ENCODE measurements at regions of chr2 and their contacts with region 1.

Region 1: DNA sequence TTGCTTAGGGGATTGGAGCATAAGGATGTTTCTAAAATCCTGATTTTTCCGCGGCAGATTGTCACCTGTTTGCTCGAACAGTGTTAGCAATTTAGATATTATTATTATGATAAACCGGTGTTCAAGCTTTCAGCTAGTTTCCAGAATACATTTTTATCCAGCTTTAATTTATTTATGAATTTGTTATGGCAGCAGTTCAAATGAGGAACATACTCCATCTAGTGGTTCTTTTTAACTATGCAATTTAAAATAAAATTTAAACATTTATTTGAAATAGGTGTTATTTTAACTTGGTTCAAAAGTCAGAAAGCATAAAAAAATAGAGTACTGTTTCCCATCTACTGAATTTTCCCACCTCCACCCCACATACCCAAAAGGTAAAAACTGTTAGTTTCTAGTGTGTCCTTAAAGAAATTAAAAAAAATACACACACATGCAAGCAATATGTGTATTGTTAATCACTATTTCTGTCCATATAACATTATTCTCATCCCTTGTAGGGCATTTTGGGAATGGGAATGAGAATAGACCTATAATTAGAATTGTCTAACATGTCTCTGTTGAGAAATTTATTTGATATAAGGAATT is 23.2 kb downstream of the ACOXL start:
- DNase-seq: no peak
- ATAC-seq: no peak
- H3K4me3 ChIP-seq: no peak overlapping the region
- H3K27ac ChIP-seq: no peak overlapping the region
- H3K4me1 ChIP-seq: no peaks in the 10 kb centered on the region
- H3K27me3 ChIP-seq: no peaks in the 10 kb centered on the region
- CTCF ChIP-seq: peak; percentile 34 to 58 (median 34); a peak in 3 of 6 replicates
- EP300 ChIP-seq: no peak
- POLR2A ChIP-seq: no peak
- RAD21 ChIP-seq: peak; percentile 52

Region 2: DNA sequence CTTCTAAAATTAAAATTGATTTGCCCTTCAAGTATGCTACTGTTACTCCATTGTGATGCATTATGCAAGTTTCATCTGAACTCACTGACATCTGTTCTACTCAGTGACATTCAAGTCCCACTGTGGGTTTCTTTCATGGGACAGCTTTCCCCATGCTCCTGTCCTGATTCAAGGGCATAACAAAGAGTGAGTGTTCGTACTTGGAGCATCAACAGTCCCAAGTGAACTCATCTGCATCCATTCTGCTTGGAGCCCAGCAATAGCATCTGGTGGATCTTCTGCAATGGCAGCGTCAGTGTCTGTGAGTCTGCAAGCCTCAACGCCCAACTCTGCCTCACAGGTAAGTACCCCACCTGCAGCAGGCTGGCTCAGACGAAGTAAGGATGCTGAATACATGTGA is 105.2 kb before region 1 on chr2:
- CTCF ChIA-PET with region 1: interaction called, 11 read pairs
- POLR2A ChIA-PET with region 1: no interaction called
- RAD21 ChIA-PET with region 1: interaction called, 5 read pairs
- SMC1A ChIA-PET with region 1: interaction called, 10 read pairs
- in situ Hi-C with region 1: no loop called
- intact Hi-C with region 1: no loop called
- DNase-seq: no peak
- ATAC-seq: no peak
- H3K4me3 ChIP-seq: no peak overlapping the region
- H3K27ac ChIP-seq: no peak overlapping the region
- H3K4me1 ChIP-seq: no peaks in the 10 kb centered on the region
- H3K27me3 ChIP-seq: no peaks in the 10 kb centered on the region
- CTCF ChIP-seq: no peak
- EP300 ChIP-seq: no peak
- POLR2A ChIP-seq: no peak
- RAD21 ChIP-seq: no peak

Region 3: GRCh38 chr2:110657724-110658305 is 97.8 kb before region 1 on chr2:
- CTCF ChIA-PET with region 1: interaction called, 14 read pairs
- POLR2A ChIA-PET with region 1: no interaction called
- RAD21 ChIA-PET with region 1: interaction called, 10 read pairs
- SMC1A ChIA-PET with region 1: interaction called, 22 read pairs
- in situ Hi-C with region 1: no loop called
- intact Hi-C with region 1: no loop called
- DNase-seq: no peak
- ATAC-seq: peak; percentile 71
- H3K4me3 ChIP-seq: no peak overlapping the region
- H3K27ac ChIP-seq: no peak overlapping the region
- H3K4me1 ChIP-seq: no peaks in the 10 kb centered on the region
- H3K27me3 ChIP-seq: no peaks in the 10 kb centered on the region
- CTCF ChIP-seq: no peak
- EP300 ChIP-seq: no peak
- POLR2A ChIP-seq: no peak
- RAD21 ChIP-seq: no peak

Region 4: GRCh38 chr2:110667071-110667470 is 88.5 kb before region 1 on chr2:
- CTCF ChIA-PET with region 1: interaction called, 48 read pairs
- POLR2A ChIA-PET with region 1: no interaction called
- RAD21 ChIA-PET with region 1: interaction called, 9 read pairs
- SMC1A ChIA-PET with region 1: interaction called, 251 read pairs
- in situ Hi-C with region 1: no loop called
- intact Hi-C with region 1: no loop called
- DNase-seq: no peak
- ATAC-seq: no peak
- H3K4me3 ChIP-seq: no peak overlapping the region
- H3K27ac ChIP-seq: no peak overlapping the region
- H3K4me1 ChIP-seq: peaks cover 2% of the 10 kb centered on the region
- H3K27me3 ChIP-seq: no peaks in the 10 kb centered on the region
- CTCF ChIP-seq: no peak
- EP300 ChIP-seq: no peak
- POLR2A ChIP-seq: no peak
- RAD21 ChIP-seq: no peak

Region 5: DNA sequence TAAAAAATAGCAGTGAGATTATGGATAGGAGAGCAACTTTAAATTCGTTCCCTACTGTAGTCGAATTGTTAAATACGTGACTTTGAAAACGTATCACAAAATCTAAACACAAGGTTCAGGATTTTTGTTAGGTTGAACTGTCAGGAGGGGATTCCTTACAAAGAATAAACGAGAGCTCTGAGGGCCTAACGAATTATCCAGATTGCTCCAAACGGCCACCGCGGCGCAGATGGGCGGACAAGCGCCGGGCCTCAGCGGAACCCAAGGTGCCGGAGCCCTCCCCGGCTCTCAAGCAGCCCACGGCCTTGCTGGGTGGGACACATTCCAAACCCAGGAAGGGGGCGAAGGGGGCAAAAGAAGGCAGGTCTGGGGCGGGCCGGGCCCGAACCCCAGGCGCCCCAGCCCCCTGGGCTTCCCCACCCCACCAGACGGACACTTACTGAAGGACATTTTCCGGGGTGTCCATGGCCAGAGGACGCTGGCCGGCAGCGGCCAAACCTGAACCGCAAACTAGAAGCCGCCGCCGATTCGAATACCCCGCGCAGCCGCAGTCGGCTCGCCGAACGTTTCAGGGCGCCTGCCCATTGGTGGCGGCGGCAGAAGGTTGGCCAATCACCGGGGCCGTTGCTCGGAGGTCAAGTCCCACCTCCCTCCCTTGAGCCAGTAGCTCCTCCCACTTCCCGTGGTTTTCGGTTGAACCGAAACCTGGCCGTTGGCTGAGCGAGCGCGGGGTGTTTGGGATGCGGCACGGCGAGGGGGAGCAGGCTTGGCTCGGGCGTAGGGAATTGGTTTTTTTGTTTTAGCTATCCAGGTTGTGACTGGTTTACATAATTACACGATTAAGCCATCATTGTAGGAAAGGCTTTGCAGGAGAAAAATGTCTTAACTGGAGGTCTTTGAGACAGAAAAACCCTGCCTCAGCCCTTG is 77.8 kb before region 1 on chr2 and contains the start of gene BUB1:
- CTCF ChIA-PET with region 1: interaction called, 48 read pairs
- POLR2A ChIA-PET with region 1: interaction called, 3 read pairs
- RAD21 ChIA-PET with region 1: interaction called, 53 read pairs
- SMC1A ChIA-PET with region 1: interaction called, 251 read pairs
- in situ Hi-C with region 1: no loop called
- intact Hi-C with region 1: no loop called
- DNase-seq: peak; percentile 83
- ATAC-seq: peak; percentile 88
- H3K4me3 ChIP-seq: peak within 1 kb of the TSS; percentile 87
- H3K27ac ChIP-seq: peak within 1 kb of the TSS; percentile 98
- H3K4me1 ChIP-seq: peaks cover 9% of the 10 kb centered on the region
- H3K27me3 ChIP-seq: no peaks in the 10 kb centered on the region
- CTCF ChIP-seq: no peak
- EP300 ChIP-seq: peak in 1 of 2 experiments; percentile 52; a peak in 2 of 4 replicates
- POLR2A ChIP-seq: peak; percentile 87
- RAD21 ChIP-seq: no peak
- polyA plus RNA-seq, gene BUB1: 52.4 to 57.0 TPM

Region 6: GRCh38 chr2:110713513-110714362 is 41.8 kb before region 1 on chr2:
- CTCF ChIA-PET with region 1: interaction called, 4 read pairs
- POLR2A ChIA-PET with region 1: no interaction called
- RAD21 ChIA-PET with region 1: interaction called, 4 read pairs
- SMC1A ChIA-PET with region 1: interaction called, 10 read pairs
- in situ Hi-C with region 1: no loop called
- intact Hi-C with region 1: no loop called
- DNase-seq: no peak
- ATAC-seq: peak; percentile 55
- H3K4me3 ChIP-seq: no peak overlapping the region
- H3K27ac ChIP-seq: no peak overlapping the region
- H3K4me1 ChIP-seq: no peaks in the 10 kb centered on the region
- H3K27me3 ChIP-seq: peaks cover 0 to 3% of the 10 kb centered on the region in 2 experiments; a peak in 1 of 4 replicates
- CTCF ChIP-seq: no peak
- EP300 ChIP-seq: no peak
- POLR2A ChIP-seq: no peak
- RAD21 ChIP-seq: no peak

Measured in GM12878 (cell line).